ENCODE measurements at regions of chr4 and their contacts with region 1.

Region 1: GRCh38 chr4:45530498-45530897 is 593.4 kb downstream of the GABRG1 start:
- DNase-seq: no peak
- ATAC-seq: no peak
- H3K4me3 ChIP-seq: no peak overlapping the region
- H3K27ac ChIP-seq: no peak overlapping the region
- H3K4me1 ChIP-seq: no peaks in the 10 kb centered on the region
- H3K27me3 ChIP-seq: no peaks in the 10 kb centered on the region
- CTCF ChIP-seq: no peak
- EP300 ChIP-seq: no peak
- POLR2A ChIP-seq: no peak
- RAD21 ChIP-seq: no peak

Region 2: DNA sequence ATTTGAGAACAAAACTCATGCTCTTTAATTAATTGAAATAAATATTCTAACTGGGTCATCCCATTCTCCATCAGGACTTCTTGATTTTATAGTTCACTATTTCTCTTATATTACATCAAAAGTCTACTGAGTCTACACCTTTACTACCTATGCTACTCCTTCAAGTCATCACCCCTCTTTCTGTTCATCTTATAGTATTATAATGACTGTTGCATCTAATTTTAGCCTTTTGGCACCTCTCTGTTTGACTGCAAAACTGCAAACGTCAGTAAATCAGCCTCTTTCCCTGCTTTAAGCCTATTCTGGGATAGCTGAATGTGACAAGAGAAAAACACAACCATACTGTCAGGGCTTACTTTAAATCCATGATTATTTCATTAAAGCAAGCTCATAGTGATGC is 45.8 kb before region 1 on chr4:
- CTCF ChIA-PET with region 1: no interaction called
- POLR2A ChIA-PET with region 1: interaction called, 10 read pairs
- RAD21 ChIA-PET with region 1: no interaction called
- SMC1A ChIA-PET with region 1: no interaction called
- in situ Hi-C with region 1: no loop called
- intact Hi-C with region 1: no loop called
- DNase-seq: no peak
- ATAC-seq: no peak
- H3K4me3 ChIP-seq: no peak overlapping the region
- H3K27ac ChIP-seq: no peak overlapping the region
- H3K4me1 ChIP-seq: no peaks in the 10 kb centered on the region
- H3K27me3 ChIP-seq: no peaks in the 10 kb centered on the region
- CTCF ChIP-seq: no peak
- EP300 ChIP-seq: no peak
- POLR2A ChIP-seq: no peak
- RAD21 ChIP-seq: no peak